Activated naive CD4-positive, alpha-beta T cell treated with anti-CD3 and anti-CD28 coated beads for 36 hours (primary cell): ENCODE measurements at regions of chrX and their contacts with region 1.

Region 1: GRCh38 chrX:39772057-39772832 is 325.5 kb downstream of the BCOR start:
- DNase-seq: peak; percentile 87
- H3K4me3 Mint-ChIP-seq: peak overlapping the region; percentile 15
- H3K27ac Mint-ChIP-seq: peak overlapping the region; percentile 83
- H3K4me1 Mint-ChIP-seq: peaks cover 40% of the 10 kb centered on the region
- H3K27me3 Mint-ChIP-seq: no peaks in the 10 kb centered on the region

Region 2: DNA sequence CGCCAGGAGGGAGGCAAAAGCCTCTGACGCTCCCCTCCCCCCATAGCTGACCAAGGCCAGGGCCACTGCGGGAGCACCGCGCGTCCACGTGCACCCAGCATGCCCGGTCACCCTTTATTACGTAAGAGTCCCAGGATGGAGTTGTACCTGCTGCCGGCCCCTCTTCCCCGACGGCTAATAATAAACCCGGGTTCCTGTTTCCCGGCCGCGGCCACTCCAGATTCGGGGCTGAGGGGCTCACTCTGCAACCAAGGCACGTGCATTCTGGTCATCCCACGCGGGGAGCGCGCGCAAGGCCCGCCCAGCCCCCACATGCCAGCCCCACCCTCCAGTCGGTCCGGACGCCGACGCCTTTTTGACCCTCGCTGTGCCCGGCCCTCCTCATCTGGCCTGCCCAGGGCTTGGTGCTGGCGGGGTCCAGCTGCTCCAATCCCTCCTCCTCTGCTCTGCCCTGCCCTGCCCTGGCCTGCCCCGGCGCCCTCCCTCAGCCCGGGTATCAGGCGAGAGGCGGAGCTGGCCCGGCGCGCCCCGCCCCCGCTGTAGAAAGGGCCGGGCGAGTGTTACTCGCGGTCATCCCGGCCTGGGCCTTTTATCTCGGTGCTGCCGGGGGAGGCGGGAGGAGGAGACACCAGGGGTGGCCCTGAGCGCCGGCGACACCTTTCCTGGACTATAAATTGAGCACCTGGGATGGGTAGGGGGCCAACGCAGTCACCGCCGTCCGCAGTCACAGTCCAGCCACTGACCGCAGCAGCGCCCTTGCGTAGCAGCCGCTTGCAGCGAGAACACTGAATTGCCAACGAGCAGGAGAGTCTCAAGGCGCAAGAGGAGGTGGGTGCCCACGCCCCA is 968.4 kb before region 1 on chrX:
- CTCF ChIA-PET with region 1: no interaction called
- intact Hi-C with region 1: loop called (anchors 2 kb)
- DNase-seq: peak; percentile 79
- H3K4me3 Mint-ChIP-seq: peak overlapping the region; percentile 87
- H3K27ac Mint-ChIP-seq: peak overlapping the region; percentile 97
- H3K4me1 Mint-ChIP-seq: peaks cover 17% of the 10 kb centered on the region
- H3K27me3 Mint-ChIP-seq: no peaks in the 10 kb centered on the region

Region 3: DNA sequence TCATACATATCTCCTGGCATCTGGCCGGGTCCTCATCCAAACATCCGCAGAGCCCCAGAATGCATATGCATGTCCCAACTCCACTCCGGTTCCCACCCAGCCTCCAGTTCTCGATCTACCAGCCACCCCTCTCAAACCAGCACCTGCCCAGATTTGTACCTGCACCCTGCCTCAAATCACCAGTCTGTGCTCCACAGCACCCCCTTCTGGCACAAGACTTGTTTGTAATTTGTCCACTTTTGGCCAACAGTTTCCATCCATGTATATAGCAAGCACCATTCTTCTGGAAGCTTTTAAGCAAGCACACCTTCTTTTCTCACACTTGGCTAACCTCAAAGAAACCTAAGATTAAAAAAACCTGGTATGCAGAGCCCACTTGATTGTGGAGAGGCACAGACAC is 326.9 kb before region 1 on chrX:
- CTCF ChIA-PET with region 1: no interaction called
- intact Hi-C with region 1: loop called (anchors 10 kb)
- DNase-seq: peak; percentile 70
- H3K4me3 Mint-ChIP-seq: no peak overlapping the region
- H3K27ac Mint-ChIP-seq: peak overlapping the region; percentile 71
- H3K4me1 Mint-ChIP-seq: peaks cover 47% of the 10 kb centered on the region
- H3K27me3 Mint-ChIP-seq: no peaks in the 10 kb centered on the region

Region 4: DNA sequence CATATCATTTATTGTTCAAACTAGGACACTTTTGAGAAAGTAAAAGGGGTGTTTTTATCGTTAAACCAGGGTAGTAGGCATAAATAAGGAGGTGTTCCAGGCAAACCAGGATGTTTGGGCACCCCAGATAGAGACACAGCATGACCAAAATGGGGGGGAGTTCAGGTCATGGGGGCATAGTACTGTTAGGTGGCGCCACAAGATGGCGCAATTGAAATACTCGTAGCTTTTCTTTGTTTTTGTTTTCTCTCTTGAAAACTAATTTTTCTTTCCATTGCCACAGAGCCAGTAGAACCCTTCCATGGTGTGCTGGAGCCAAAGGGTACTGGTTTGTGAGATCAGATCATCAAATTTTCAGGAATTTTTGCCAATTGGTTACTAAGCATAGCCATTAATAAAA is 42.1 kb after region 1 on chrX:
- CTCF ChIA-PET with region 1: no interaction called
- intact Hi-C with region 1: loop called (anchors 1 kb)
- DNase-seq: peak; percentile 58
- H3K4me3 Mint-ChIP-seq: no peak overlapping the region
- H3K27ac Mint-ChIP-seq: no peak overlapping the region
- H3K4me1 Mint-ChIP-seq: peaks cover 30% of the 10 kb centered on the region
- H3K27me3 Mint-ChIP-seq: no peaks in the 10 kb centered on the region

Region 5: GRCh38 chrX:39984191-39984956 is 212.1 kb after region 1 on chrX:
- CTCF ChIA-PET with region 1: no interaction called
- intact Hi-C with region 1: no loop called
- DNase-seq: no peak
- H3K4me3 Mint-ChIP-seq: no peak overlapping the region
- H3K27ac Mint-ChIP-seq: no peak overlapping the region
- H3K4me1 Mint-ChIP-seq: peaks cover 7% of the 10 kb centered on the region
- H3K27me3 Mint-ChIP-seq: no peaks in the 10 kb centered on the region

Region 6: GRCh38 chrX:40013266-40014195 is 241.3 kb after region 1 on chrX:
- CTCF ChIA-PET with region 1: no interaction called
- intact Hi-C with region 1: loop called (anchors 5 kb)
- DNase-seq: peak; percentile 55
- H3K4me3 Mint-ChIP-seq: peak overlapping the region; percentile 69
- H3K27ac Mint-ChIP-seq: peak overlapping the region; percentile 63
- H3K4me1 Mint-ChIP-seq: peaks cover 26% of the 10 kb centered on the region
- H3K27me3 Mint-ChIP-seq: peaks cover 24% of the 10 kb centered on the region

Region 7: DNA sequence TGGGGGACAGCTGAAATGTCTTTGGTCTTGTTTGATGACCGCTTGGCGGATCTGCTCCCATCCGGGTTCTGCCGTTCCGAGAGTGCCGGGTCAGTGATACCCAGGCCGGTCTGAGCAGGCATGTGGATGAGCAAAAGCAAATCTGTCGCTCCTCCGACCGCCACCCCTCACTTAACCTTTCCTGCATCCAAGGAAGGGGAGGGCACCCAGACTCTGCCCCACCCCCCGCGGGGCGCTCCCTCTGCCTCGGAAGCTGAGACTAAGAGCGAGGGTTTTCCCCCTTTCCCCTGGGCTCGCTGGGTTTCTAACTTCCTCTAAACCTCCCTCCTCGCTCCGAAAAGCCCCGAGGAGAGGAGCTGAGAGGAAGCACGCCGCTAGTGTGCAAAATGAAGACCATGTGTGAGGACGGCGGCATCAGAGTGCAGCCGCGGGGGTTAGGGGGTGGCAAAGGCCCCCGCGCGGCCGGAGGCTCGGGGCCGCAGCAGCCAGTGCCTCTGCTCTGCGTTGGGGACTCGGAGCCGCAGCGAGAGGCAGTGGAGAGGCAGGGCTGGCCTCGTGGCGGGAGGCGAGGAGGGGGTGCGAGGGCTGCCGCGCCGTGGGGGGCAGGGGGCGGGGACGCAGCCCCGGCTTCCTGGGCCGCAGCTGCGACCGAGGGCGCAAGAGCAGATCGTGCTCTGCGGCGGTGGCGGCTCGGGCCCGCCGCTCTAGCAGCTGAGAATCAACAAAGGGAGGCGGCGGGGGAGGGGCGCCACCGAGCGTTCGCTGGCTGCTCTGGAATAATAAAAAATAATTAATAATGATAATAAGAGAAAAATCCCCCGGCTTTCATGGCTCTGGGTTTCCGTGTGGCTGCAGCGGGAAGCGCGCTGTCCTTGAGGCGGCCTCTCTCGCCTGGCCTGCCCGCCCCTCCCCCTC is 381.3 kb after region 1 on chrX:
- CTCF ChIA-PET with region 1: no interaction called
- intact Hi-C with region 1: loop called (anchors 1 kb)
- DNase-seq: peak; percentile 91
- H3K4me3 Mint-ChIP-seq: peak overlapping the region; percentile 72
- H3K27ac Mint-ChIP-seq: peak overlapping the region; percentile 53
- H3K4me1 Mint-ChIP-seq: peaks cover 10% of the 10 kb centered on the region
- H3K27me3 Mint-ChIP-seq: no peaks in the 10 kb centered on the region